Tibial artery (tissue), 4 donors: ENCODE measurements at regions of chr6 and their contacts with region 1.

Region 1: DNA sequence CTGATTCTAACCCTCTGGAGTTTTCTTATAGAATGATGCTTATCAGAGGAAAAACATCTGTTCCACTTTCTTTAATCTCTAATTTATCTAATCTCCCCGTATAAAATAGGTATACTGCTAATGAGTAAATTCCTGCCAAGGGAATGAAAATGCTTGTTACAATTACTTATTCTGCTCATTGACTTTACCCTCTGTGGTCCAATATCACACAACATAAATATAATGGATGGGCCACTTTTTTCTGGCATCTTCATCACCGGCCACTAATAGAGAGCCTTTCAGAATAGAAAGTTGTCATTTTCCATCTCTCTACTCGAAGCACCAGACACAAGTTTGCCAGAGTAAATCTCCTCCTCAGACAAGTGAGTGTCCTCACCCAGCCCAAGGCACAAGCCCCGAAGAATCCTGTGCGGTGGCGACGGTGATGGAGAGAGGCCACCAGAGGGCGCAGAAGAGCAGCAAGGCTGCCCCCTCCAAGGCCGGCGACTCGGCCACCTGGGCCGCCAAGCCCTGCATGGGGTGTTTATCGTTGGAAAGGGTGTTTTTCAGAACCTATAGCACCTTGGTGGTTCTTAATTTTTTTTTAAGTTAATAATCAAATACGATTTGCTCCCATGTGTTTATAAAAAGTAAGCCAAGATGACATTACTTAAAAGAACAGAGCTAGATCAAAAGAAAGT is 212.9 kb upstream of the ARID1B start:
- DNase-seq: peak; percentile 78 to 85
- H3K4me3 ChIP-seq: no peak overlapping the region
- H3K27ac ChIP-seq: no peak overlapping the region
- H3K4me1 ChIP-seq: peaks cover 0 to 3% (median 0%) of the 10 kb centered on the region in 4 donors
- H3K27me3 ChIP-seq: peaks cover 0 to 6% of the 10 kb centered on the region in 2 donors
- CTCF ChIP-seq: peak; percentile 87 to 97

Region 2: DNA sequence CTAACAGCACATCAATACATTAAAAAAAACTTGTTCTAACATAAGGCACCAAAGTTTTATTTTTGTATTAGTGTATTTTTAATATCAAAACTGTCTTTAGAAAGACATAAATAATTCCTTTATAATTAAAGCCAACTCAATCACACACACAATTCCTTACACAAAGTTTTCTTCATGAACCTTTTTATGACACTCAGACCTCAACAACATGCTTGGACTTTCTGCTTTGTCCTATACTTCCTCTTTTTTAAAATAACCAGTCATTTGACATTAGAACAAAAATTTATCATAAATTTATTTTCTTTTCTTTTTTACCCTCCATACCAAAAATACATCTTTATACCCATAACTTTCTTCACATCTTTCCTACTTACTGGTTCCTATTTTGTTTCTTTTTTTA is 79.1 kb before region 1 on chr6:
- intact Hi-C with region 1: no loop called
- DNase-seq: no peak
- H3K4me3 ChIP-seq: no peak overlapping the region
- H3K27ac ChIP-seq: no peak overlapping the region
- H3K4me1 ChIP-seq: no peaks in the 10 kb centered on the region
- H3K27me3 ChIP-seq: no peaks in the 10 kb centered on the region
- CTCF ChIP-seq: no peak

Region 3: GRCh38 chr6:156699017-156699421 is 134.8 kb after region 1 on chr6:
- intact Hi-C with region 1: loop called (anchors 10 kb)
- DNase-seq: no peak
- H3K4me3 ChIP-seq: no peak overlapping the region
- H3K27ac ChIP-seq: no peak overlapping the region
- H3K4me1 ChIP-seq: peaks cover 0 to 9% (median 0%) of the 10 kb centered on the region in 4 donors
- H3K27me3 ChIP-seq: no peaks in the 10 kb centered on the region
- CTCF ChIP-seq: no peak

Region 4: DNA sequence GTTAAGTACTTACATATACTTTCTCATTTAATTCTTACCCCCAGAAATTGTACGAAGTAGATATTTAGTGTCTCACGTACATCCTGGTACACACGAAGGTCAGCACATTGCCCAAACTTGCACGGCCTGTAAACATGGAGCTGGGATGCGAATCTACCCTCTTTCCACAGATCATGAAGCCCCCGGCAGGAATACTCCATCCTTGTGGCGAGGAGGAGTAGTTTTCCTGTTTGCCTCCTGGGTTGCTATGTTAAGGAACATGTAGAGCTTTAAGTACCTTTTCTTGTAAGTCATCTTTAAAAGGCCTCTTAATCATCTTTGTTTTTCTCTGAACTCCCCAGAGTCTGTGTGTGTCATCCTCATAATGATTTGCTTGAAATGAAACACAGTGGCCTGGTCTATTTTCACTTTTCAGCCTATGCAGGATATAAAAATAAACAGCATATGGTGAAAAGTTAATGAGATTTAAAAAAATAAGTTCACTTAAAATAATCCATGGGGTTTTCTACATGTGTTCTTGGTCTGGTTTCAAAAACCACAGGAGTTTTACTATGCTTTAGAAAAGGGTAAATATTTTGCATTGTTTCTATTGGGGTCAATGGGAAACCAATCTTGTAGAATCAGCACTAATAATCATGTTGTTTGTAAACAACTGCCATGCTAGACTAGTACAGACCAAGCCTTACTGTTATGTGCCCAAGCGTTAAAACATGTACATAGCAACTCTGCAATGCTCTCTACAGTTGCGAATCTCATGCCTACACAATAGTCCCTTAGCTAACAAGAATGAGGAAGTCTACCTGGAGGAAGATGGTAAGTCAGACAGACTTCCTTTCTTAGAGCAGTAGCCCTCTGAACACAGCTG is 203.6 kb after region 1 on chr6:
- intact Hi-C with region 1: loop called (anchors 5 kb)
- DNase-seq: no peak
- H3K4me3 ChIP-seq: no peak overlapping the region
- H3K27ac ChIP-seq: no peak overlapping the region
- H3K4me1 ChIP-seq: no peaks in the 10 kb centered on the region
- H3K27me3 ChIP-seq: no peaks in the 10 kb centered on the region
- CTCF ChIP-seq: no peak

Region 5: DNA sequence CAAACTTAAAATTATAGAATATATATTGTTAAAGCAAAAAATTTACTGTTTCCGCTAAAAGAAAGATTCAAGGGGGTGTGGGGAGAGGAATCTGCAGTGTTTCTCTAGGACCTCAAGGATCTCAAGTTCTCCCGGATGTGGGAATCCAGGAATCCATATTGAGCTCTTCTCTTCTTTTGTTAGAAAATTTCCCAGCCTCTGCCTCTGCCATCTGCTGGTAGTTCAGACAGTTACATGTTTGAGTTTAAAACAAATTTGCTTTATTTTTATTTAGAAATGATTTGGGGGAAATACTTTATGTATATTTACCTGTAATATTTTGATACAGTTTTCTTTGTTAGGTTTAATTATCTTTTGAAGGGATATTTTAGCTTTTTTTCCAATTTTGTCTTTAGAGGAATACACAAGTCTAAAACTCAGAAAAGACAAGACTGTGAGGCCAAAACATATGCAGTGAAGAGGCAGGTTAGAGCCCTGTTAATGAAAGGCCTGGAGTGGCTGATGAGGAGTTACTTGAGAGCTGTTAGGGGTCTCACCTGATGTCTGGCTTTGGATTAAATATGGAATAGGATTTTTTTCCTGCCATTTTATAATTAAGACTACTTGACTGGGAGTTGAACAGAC is 481.7 kb after region 1 on chr6:
- intact Hi-C with region 1: loop called (anchors 10 kb)
- DNase-seq: no peak
- H3K4me3 ChIP-seq: no peak overlapping the region
- H3K27ac ChIP-seq: no peak overlapping the region
- H3K4me1 ChIP-seq: peaks cover 0 to 38% (median 17%) of the 10 kb centered on the region in 4 donors
- H3K27me3 ChIP-seq: no peaks in the 10 kb centered on the region
- CTCF ChIP-seq: peak; percentile 32 to 40

Region 6: GRCh38 chr6:157184202-157185020 is 620.1 kb after region 1 on chr6:
- intact Hi-C with region 1: loop called (anchors 2 kb)
- DNase-seq: peak; percentile 67 to 84
- H3K4me3 ChIP-seq: peak overlapping the region; percentile 19 to 20
- H3K27ac ChIP-seq: peak overlapping the region; percentile 27 to 31
- H3K4me1 ChIP-seq: peaks cover 0 to 23% (median 13%) of the 10 kb centered on the region in 4 donors
- H3K27me3 ChIP-seq: no peaks in the 10 kb centered on the region
- CTCF ChIP-seq: peak; percentile 93 to 97

Region 7: GRCh38 chr6:157274471-157275226 is 710.4 kb after region 1 on chr6:
- intact Hi-C with region 1: loop called (anchors 10 kb)
- DNase-seq: peak; percentile 78 to 92
- H3K4me3 ChIP-seq: peak overlapping the region; percentile 65 to 67
- H3K27ac ChIP-seq: peak overlapping the region; percentile 90 to 96
- H3K4me1 ChIP-seq: peaks cover 0 to 43% (median 31%) of the 10 kb centered on the region in 4 donors
- H3K27me3 ChIP-seq: no peaks in the 10 kb centered on the region
- CTCF ChIP-seq: peak; percentile 67 to 98